PC-9 (cell line): ENCODE measurements at regions of chr1 and their contacts with region 1.

Region 1: GRCh38 chr1:20661207-20662109 is at the start of gene DDOST:
- DNase-seq: peak; percentile 91 to 94
- H3K4me3 ChIP-seq: peak within 1 kb of the TSS; percentile 92
- H3K27ac ChIP-seq: peak within 1 kb of the TSS; percentile 41
- H3K4me1 ChIP-seq: peaks cover 11% of the 10 kb centered on the region
- H3K27me3 ChIP-seq: no peaks in the 10 kb centered on the region
- CTCF ChIP-seq: no peak
- total RNA-seq, gene DDOST: 210 and 251 TPM in 2 replicates

Region 2: GRCh38 chr1:20390589-20391331 is 270.7 kb before region 1 on chr1:
- CTCF ChIA-PET with region 1: interaction called, 12 read pairs
- POLR2A ChIA-PET with region 1: no interaction called
- intact Hi-C with region 1: no loop called
- DNase-seq: peak in 1 of 2 experiments; percentile 42
- H3K4me3 ChIP-seq: no peak overlapping the region
- H3K27ac ChIP-seq: no peak overlapping the region
- H3K4me1 ChIP-seq: no peaks in the 10 kb centered on the region
- H3K27me3 ChIP-seq: no peaks in the 10 kb centered on the region
- CTCF ChIP-seq: no peak

Region 3: DNA sequence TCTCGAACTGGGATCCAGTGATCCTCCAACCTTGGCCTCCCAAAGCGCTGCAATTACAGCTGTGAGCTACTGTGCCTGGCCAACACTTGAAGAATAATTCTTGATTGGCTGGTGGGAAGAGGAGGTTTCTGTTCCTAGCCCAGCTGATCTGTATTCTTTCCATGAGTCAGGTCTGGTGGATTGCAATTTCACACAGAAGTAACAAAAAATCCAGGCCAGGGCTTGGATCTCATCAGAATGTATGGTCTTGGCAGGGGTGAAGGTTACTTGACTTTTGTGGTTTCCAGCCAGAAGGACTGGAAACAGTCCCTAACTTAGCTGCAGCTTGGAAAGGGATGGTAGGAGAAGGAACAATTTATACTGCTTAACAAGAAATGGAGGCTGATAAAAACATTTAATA is 130.7 kb after region 1 on chr1:
- CTCF ChIA-PET with region 1: interaction called, 15 read pairs
- POLR2A ChIA-PET with region 1: no interaction called
- intact Hi-C with region 1: no loop called
- DNase-seq: no peak
- H3K4me3 ChIP-seq: no peak overlapping the region
- H3K27ac ChIP-seq: no peak overlapping the region
- H3K4me1 ChIP-seq: 0 out of 2 replicates have a peak, but pooled peaks cover 10% of the 10 kb centered on the region
- H3K27me3 ChIP-seq: no peaks in the 10 kb centered on the region
- CTCF ChIP-seq: no peak